MCF 10A (cell line): ENCODE measurements at regions of chr21 and their contacts with region 1.

Region 1: GRCh38 chr21:38819714-38820183 is 14.0 kb downstream of the ETS2 start:
- DNase-seq: peak; percentile 71
- H3K4me3 Mint-ChIP-seq: peak overlapping the region; percentile 40
- H3K27ac Mint-ChIP-seq: peak overlapping the region; percentile 75
- H3K4me1 Mint-ChIP-seq: peaks cover 35% of the 10 kb centered on the region
- H3K27me3 Mint-ChIP-seq: no peaks in the 10 kb centered on the region
- CTCF ChIP-seq: no peak

Region 2: GRCh38 chr21:38755681-38756371 is 63.9 kb before region 1 on chr21:
- CTCF ChIA-PET with region 1: no interaction called
- POLR2A ChIA-PET with region 1: interaction called, 25 read pairs
- intact Hi-C with region 1: no loop called
- DNase-seq: peak; percentile 90
- H3K4me3 Mint-ChIP-seq: peak overlapping the region; percentile 26
- H3K27ac Mint-ChIP-seq: peak overlapping the region; percentile 96
- H3K4me1 Mint-ChIP-seq: peaks cover 31% of the 10 kb centered on the region
- H3K27me3 Mint-ChIP-seq: no peaks in the 10 kb centered on the region
- CTCF ChIP-seq: no peak

Region 3: DNA sequence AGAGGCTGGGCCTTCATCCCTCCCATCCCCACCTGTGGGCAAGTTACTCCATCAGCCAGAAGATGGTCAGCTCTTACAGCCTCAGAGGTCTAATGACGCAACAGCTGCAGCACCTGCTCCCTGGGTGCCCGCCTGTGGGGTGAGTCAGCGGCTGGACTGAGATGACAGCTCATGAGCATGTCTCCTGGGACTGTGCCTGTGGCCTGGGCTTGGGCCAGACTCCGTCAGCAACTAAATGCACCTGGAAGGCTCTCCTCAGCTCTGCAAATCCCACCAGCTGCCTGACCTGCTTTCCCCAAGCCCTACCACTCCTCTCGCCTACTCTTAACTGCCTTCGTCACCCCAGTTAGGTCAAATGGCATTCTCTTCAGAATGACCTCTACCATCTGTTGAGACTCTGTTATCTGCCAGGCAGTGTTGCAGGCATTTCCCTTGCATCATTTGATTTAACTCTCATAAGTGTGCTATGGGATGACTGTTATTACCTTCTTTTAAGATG is 33.7 kb after region 1 on chr21:
- CTCF ChIA-PET with region 1: no interaction called
- POLR2A ChIA-PET with region 1: interaction called, 13 read pairs
- intact Hi-C with region 1: no loop called
- DNase-seq: peak; percentile 99
- H3K4me3 Mint-ChIP-seq: no peak overlapping the region
- H3K27ac Mint-ChIP-seq: peak overlapping the region; percentile 40
- H3K4me1 Mint-ChIP-seq: peaks cover 34% of the 10 kb centered on the region
- H3K27me3 Mint-ChIP-seq: no peaks in the 10 kb centered on the region
- CTCF ChIP-seq: no peak

Region 4: DNA sequence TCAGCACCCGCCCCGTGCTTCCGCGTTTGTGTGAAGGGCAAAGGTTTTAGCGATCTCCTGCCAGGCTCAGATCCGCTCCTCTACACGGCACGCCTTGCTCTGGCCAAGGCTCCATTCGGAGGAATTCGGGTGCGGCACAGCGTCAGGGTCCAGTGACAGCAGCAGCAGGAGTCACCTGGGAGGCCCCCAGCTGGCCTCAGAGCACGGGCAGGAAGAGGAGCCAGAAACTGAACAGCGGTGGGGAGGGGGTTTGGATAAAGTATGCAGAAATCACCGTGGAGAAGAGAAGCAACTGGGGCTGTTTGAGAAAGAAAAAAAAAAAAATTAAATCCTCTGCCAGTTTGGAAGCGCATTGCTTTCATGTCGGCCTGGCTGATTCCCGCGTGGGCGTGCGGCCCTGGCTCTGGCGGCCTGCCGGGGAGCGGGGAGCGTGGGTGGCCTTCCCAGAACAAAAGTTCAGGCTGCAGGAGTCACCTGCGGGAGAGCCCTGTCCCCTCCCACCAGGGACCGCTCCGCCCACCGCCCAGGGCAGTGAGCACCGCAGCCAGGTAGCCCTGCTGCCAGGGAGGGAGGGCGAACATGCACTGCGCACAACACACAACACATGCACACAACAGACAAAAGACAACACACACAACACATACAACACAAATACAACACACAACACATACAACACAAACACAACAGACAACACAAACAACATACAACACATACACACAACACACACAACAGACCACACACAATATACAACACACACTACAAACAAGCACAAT is 93.6 kb after region 1 on chr21:
- CTCF ChIA-PET with region 1: no interaction called
- POLR2A ChIA-PET with region 1: interaction called, 15 read pairs
- intact Hi-C with region 1: no loop called
- DNase-seq: peak; percentile 92
- H3K4me3 Mint-ChIP-seq: no peak overlapping the region
- H3K27ac Mint-ChIP-seq: no peak overlapping the region
- H3K4me1 Mint-ChIP-seq: peaks cover 9% of the 10 kb centered on the region
- H3K27me3 Mint-ChIP-seq: no peaks in the 10 kb centered on the region
- CTCF ChIP-seq: no peak

Region 5: DNA sequence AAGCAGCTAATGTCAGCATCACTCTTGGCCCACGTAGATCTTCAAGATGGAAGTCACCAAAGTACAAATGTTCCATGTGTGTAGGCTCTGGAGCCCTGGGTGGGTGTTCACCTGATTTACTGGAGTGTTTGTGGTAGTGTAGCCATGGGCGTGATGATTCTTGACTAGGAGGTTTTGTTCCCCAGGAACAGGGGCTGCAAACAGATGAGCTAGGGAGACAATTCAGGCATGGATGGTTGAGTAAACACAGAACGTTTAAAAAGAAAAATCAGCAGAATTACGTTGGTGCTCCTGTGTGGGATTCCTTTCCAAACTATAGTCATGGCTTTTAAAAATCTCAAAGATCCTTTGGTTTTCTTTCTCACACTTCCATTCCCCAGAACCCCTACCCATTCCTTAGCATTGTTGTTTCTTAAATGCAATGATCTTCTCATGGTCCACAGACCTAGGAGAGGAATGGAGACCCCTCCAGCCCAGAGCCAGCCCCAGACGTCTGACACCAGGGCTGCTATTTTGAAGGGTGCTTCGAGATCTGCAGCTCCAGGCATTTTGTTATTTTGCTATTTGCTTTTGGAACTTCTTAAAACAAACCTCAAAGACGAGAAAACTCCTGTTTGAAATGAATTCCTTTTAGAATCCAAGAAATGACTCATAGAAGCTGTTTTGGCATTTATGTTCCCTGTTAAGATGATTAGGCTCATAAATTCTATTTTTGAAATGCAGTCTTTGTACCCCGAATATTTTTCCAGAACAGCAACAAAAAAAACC is 101.1 kb after region 1 on chr21:
- CTCF ChIA-PET with region 1: no interaction called
- POLR2A ChIA-PET with region 1: interaction called, 12 read pairs
- intact Hi-C with region 1: no loop called
- DNase-seq: peak; percentile 49
- H3K4me3 Mint-ChIP-seq: peak overlapping the region; percentile 41
- H3K27ac Mint-ChIP-seq: peak overlapping the region; percentile 88
- H3K4me1 Mint-ChIP-seq: peaks cover 30% of the 10 kb centered on the region
- H3K27me3 Mint-ChIP-seq: no peaks in the 10 kb centered on the region
- CTCF ChIP-seq: no peak

Region 6: DNA sequence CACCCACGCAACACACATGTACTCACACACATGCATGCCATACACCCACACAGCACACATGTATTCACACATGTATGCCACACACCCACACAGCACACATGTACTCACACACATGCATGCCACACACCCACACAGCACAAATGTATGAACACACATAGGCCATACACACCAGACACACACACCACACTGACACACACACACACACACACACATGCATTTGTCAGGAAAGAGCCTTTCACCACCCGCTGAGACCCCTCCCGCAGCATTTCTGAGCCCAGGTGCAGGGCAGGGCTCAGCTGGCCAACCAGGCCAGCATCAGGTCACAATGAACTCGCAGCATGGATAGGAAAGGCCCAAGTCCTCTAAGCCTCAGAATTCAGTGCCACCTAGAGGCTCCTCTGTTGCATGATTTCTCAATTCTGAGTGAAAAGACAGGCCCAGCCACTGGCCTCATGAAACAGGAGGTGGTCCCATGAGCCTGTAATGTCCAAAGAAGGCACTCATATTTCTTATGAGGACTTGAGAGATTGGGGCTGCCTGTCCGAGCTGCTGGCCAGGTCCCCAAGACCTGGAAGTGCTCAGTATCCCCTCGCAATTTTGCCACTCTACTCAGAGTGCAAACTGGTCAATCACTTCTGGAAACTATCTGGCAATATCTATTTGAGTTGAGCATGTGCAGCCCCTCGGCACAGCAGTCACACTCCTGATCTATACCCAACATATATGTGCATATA is 306.2 kb after region 1 on chr21:
- CTCF ChIA-PET with region 1: interaction called, 6 read pairs
- POLR2A ChIA-PET with region 1: interaction called, 15 read pairs
- intact Hi-C with region 1: no loop called
- DNase-seq: peak; percentile 78
- H3K4me3 Mint-ChIP-seq: no peak overlapping the region
- H3K27ac Mint-ChIP-seq: peak overlapping the region; percentile 59
- H3K4me1 Mint-ChIP-seq: peaks cover 6% of the 10 kb centered on the region
- H3K27me3 Mint-ChIP-seq: no peaks in the 10 kb centered on the region
- CTCF ChIP-seq: peak; percentile 72